Right ventricle myocardium inferior (tissue), 1 donor: ENCODE measurements at regions of chr11 and their contacts with region 1.

Region 1: DNA sequence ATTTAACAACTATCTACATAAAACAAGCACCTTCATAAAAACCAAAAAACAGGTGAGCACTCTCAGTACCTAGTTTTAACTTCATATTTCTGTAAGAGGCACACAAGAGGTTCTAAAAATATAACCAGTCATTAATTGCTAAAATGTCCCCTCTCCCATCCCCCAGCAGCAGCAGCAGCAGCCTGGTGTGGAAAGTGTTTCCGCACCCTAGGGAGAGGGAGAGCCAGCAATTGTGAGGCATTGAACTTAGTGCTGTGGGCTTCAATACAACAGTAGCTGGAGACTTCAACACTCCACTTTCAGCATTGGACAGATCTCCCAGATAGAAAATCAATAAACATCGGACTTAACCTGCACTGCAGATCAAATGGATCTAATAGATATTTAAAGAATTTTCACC is 1158.5 kb downstream of the JRKL start:
- DNase-seq: no peak
- ATAC-seq: no peak

Region 2: DNA sequence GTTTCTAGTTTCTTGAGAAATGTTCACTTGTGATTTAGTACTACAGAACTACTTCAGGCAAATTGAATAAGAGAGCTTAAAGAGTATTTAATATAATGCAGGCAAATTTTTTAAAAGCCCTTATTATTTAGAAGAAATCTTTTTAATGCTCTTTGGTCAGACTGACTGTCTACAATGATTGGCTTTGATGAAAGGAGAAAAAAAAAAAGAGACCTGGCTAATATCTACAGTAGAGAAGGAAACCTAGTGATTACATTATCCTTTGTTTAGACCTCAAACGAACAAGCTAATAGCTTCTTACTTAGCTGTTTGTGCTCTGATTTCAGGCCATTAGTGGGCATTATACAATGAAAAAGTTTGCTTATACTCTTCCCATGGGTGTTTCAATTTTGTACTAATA is 115.4 kb before region 1 on chr11:
- intact Hi-C with region 1: no loop called
- DNase-seq: no peak
- ATAC-seq: no peak

Region 3: DNA sequence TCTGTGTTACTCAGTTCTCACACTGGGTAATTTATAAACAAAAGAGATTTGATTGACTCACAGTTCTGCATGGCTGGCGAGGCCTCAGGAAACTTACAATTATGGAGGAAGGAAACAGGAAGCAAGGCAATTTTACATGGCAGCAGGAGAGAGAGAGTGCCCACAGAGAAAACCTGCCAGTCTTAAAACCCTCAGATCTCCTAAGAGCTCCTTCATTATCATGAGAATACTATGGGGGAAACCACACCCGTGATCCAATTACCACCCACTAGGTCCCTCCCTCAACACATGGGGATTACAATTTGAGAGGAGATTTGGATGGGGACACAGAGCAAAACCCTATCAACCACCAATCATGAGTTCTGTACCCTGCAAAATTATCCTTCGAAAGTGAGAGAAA is 22.4 kb after region 1 on chr11:
- intact Hi-C with region 1: loop called (anchors 1 kb)
- DNase-seq: no peak
- ATAC-seq: no peak